CD8-positive, alpha-beta T cell (primary cell): ENCODE measurements at regions of chr12 and their contacts with region 1.

Region 1: DNA sequence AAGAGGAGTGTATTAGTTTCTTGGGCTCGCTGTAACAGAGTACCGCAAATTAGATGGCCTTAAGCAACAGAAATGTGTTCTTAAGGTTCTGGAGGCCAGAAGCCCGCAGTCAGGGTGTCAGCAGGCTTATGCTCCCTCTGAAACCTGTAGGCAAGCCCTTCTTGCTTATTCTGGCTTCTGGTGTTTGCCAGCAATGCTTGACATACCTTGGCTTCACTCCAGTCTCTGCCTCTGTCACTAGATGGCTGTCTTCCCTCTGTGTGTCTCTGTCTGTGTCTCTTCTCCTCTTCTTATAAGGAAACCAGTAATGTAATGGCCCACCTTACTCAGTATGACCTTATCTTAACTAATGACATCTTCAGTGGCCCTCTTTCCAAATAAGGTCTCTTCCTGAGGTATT is 85.1 kb downstream of the DERA start:
- DNase-seq: no peak
- ATAC-seq: no peak
- H3K4me3 ChIP-seq: no peak overlapping the region
- H3K4me3 Mint-ChIP-seq: no peak overlapping the region
- H3K27ac ChIP-seq: no peak overlapping the region
- H3K27ac Mint-ChIP-seq: no peak overlapping the region
- H3K4me1 ChIP-seq: no peaks in the 10 kb centered on the region
- H3K4me1 Mint-ChIP-seq: no peaks in the 10 kb centered on the region
- H3K27me3 ChIP-seq: no peaks in the 10 kb centered on the region
- H3K27me3 Mint-ChIP-seq: no peaks in the 10 kb centered on the region
- CTCF ChIP-seq: no peak

Region 2: DNA sequence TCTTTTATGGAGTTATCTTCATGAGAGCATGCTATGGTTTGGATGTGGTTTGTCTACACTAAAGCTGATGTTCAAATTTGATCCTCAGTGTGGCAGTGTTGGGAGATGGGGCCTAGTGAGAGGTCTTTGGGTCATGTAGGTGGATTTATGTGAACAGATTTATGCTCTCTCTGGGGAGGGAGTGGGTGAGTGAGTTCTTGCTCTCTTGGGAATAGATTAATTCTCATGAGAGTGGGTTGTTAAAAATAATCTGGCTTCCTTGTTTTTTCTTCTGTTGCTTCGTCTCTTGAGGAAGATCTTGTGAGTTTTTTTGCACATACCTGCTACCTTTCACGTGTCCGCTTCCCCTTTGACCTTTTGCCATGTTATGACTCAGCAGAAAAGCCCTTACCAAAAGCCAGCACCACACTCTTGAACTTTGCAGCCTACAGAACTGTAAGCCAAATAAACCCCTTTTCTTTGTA is 64.6 kb before region 1 on chr12:
- CTCF ChIA-PET with region 1: no interaction called
- POLR2A ChIA-PET with region 1: no interaction called
- intact Hi-C with region 1: loop called in 1 of 2 experiments (anchors 2 kb)
- DNase-seq: no peak
- ATAC-seq: no peak
- H3K4me3 ChIP-seq: no peak overlapping the region
- H3K4me3 Mint-ChIP-seq: no peak overlapping the region
- H3K27ac ChIP-seq: no peak overlapping the region
- H3K27ac Mint-ChIP-seq: no peak overlapping the region
- H3K4me1 ChIP-seq: no peaks in the 10 kb centered on the region
- H3K4me1 Mint-ChIP-seq: no peaks in the 10 kb centered on the region
- H3K27me3 ChIP-seq: no peaks in the 10 kb centered on the region
- H3K27me3 Mint-ChIP-seq: no peaks in the 10 kb centered on the region
- CTCF ChIP-seq: no peak